Dendritic cell treated with granulocyte-macrophage colony-stimulating factor and Interleukin-4, amounts not matched to agents 40 ng/mL and 50 ng/mL, for 4 days (primary cell): ENCODE measurements at regions of chr3 and their contacts with region 1.

Region 1: GRCh38 chr3:146589899-146590508 is 15.1 kb downstream of the PLSCR5 start:
- H3K4me3 Mint-ChIP-seq: no peak overlapping the region
- H3K27ac Mint-ChIP-seq: no peak overlapping the region
- H3K4me1 Mint-ChIP-seq: no peaks in the 10 kb centered on the region
- H3K27me3 Mint-ChIP-seq: no peaks in the 10 kb centered on the region

Region 2: DNA sequence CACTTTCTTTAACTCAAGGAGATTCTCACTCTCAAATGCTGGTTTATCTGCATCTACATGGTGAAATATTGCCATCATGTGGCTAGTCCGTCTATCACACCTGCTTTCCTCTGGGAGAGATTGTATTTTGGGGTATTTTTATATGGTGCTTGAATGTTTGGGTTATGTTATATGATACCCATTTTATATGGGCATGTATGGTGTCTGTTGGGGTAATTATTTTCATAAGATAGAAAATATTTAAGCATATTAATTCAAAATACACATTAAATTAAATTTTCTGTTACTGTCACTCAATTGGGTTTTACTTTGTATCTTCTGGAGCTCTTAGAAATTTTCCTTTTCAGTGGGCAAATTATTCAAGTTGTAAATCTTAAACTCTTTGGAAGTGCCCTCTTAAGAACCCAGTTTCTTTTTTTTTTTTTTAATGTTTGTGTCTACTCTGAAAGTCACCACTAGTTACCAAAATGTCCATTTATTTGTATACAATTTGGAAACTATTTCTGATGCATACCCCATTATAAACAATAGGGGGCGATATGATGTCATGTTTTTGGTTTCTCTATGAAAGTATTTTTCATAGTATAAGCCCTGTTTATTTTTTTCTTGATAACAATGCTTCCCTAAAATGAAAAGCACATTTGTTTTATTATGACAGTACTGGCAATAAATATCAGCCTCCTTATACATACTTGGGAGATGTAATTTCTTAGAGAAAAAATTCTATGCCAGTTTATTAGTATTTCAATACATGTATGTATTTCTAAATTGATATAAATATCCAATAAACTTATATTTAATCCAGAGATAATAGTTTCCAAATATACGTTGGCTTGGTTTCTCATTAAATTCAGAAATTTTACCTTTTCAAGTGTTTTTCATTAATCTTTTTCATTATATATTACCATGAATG is 51.2 kb after region 1 on chr3:
- intact Hi-C with region 1: loop called (anchors 5 kb)
- H3K4me3 Mint-ChIP-seq: no peak overlapping the region
- H3K27ac Mint-ChIP-seq: no peak overlapping the region
- H3K4me1 Mint-ChIP-seq: no peaks in the 10 kb centered on the region
- H3K27me3 Mint-ChIP-seq: peaks cover 2% of the 10 kb centered on the region